Dorsolateral prefrontal cortex (tissue), 120 donors: ENCODE measurements at regions of chr15 and their contacts with region 1.

Region 1: DNA sequence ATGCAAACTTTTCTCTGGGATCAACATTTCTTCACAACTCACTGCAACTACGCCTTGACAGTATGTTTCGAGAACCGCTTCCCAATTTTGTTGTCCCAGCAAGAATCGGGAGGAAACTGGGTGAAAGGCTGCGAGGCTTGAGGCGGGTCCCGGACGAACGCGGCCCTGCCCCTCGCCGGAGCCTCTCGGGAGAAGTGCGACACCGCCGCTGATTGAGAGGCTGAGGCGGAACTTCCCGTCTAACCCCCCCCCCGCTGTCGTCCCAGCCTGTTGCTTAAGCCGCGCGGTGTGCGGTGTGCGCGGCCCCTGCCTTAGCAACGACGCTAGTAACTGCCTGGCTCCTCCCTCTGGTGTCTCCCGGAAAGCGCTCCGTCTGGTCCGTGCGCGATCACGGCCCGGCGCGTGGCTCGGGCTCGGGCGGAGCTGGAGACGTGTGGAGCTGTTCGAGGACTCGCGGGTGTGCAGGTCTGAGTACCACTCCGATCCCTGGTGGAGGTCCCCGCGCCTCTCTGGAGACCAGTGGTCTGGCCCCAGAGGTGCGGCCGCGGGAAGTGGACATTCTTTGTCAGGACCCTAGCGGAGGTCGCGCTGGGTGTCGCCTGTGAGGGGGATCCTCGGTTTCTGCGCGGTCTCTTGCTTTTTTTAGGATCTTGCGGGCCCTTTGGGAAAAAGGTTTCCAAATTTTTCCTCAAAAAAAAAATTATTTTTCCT is at the starts of genes DTWD1 and FAM227B:
- DNase-seq: peak; percentile 85 to 95 (median 92)
- H3K4me3 ChIP-seq: peak within 1 kb of the TSS; percentile 63 to 97 (median 79)
- H3K27ac ChIP-seq: peak within 1 kb of the TSS; percentile 35 to 95 (median 88)
- H3K27me3 ChIP-seq: no peaks in the 10 kb centered on the region
- CTCF ChIP-seq: peak in 49 of 56 donors; percentile 3 to 66 (median 36)
- total RNA-seq, gene DTWD1: 27.6 to 57.4 (median 39.4) TPM
- total RNA-seq, gene FAM227B: 1.9 to 17.2 (median 8.4) TPM

Region 2: DNA sequence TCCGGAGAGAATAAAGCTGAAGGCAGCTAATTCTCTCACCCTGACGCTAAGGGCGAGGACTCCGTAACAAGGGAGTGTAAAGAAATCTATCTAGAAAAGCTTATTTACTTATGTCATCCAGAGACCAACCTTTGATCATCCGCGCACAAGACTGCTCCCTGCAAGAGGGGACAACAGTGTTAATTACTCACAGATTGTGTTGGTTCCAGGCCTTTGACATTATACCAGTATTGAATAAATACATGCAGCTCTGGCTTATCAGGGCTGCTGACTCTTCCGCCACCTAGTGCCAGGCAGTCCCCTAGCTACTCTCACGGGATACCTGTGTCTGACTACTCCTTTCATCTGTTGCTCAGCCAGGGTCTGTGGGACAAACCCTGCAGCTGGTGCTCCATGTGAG is 211.7 kb after region 1 on chr15:
- intact Hi-C with region 1: no loop called
- DNase-seq: no peak
- H3K4me3 ChIP-seq: no peak overlapping the region
- H3K27ac ChIP-seq: no peak overlapping the region
- H3K27me3 ChIP-seq: no peaks in the 10 kb centered on the region
- CTCF ChIP-seq: no peak

Region 3: DNA sequence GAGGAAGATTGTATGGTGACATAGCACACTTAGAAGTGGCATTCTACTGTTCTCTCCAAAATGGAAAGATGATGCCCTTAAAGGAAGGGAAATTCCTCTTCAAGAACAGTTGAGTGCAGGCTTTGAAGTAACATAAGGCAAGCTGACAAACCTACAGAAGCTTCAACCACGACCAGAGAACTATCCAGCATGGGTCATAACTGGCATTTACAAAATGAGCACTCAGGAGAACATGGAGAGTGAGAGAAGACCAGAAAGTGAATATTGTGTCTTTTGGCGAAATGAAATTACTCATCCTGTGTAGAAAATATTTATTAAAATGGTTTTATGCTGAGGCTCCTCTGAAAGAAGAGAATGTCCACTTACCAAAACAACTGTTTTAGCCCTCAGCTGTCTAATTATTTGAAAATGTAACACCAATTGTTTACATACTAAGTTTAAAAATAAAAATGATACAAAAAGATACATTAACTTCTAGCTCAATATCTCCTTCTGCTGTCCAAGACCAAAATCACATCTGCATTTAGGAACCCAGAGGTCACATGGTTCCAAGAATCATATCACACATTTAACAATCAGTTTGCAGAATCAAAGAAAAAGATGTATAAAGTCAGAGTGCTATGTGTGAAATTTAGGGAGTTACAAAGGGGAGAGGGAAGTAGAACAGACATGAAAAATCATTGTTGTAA is 281.3 kb after region 1 on chr15:
- intact Hi-C with region 1: loop called (anchors 2 to 10 kb)
- DNase-seq: no peak
- H3K4me3 ChIP-seq: peak overlapping the region in 13 of 59 donors; percentile 2 to 56 (median 18)
- H3K27ac ChIP-seq: peak overlapping the region; percentile 72 to 96 (median 90)
- H3K27me3 ChIP-seq: no peaks in the 10 kb centered on the region
- CTCF ChIP-seq: peak in 51 of 56 donors; percentile 21 to 68 (median 46)

Region 4: GRCh38 chr15:50354838-50355618 is 734.2 kb after region 1 on chr15 and contains the start of gene GABPB1:
- intact Hi-C with region 1: loop called in 1 of 2 experiments (anchors 10 kb)
- DNase-seq: peak; percentile 76 to 90 (median 84)
- H3K4me3 ChIP-seq: peak within 1 kb of the TSS; percentile 70 to 100 (median 93)
- H3K27ac ChIP-seq: peak within 1 kb of the TSS; percentile 87 to 100 (median 98)
- H3K27me3 ChIP-seq: no peaks in the 10 kb centered on the region
- CTCF ChIP-seq: peak in 14 of 56 donors; percentile 3 to 35 (median 10)
- total RNA-seq, gene GABPB1: 7.9 to 16.9 (median 11.0) TPM